Right cardiac atrium (tissue), 5 donors: ENCODE measurements at regions of chr20 and their contacts with region 1.

Region 1: GRCh38 chr20:60210779-60211617 is 252.8 kb downstream of the CDH26 start:
- DNase-seq: peak; percentile 53 to 86 (median 83)
- ATAC-seq: peak; percentile 74 to 85
- H3K4me3 ChIP-seq: no peak overlapping the region
- H3K27ac ChIP-seq: no peak overlapping the region
- H3K4me1 ChIP-seq: peaks cover 2% of the 10 kb centered on the region
- H3K27me3 ChIP-seq: no peaks in the 10 kb centered on the region

Region 2: GRCh38 chr20:60057123-60057801 is 153.7 kb before region 1 on chr20:
- intact Hi-C with region 1: loop called in 1 of 4 experiments (anchors 10 kb)
- DNase-seq: peak; percentile 59 to 80 (median 75)
- ATAC-seq: peak; percentile 33 to 53
- H3K4me3 ChIP-seq: no peak overlapping the region
- H3K27ac ChIP-seq: no peak overlapping the region
- H3K4me1 ChIP-seq: no peaks in the 10 kb centered on the region
- H3K27me3 ChIP-seq: no peaks in the 10 kb centered on the region

Region 3: GRCh38 chr20:60138256-60139106 is 72.5 kb before region 1 on chr20:
- intact Hi-C with region 1: no loop called
- DNase-seq: peak; percentile 47 to 80 (median 76)
- ATAC-seq: peak; percentile 70 to 75
- H3K4me3 ChIP-seq: no peak overlapping the region
- H3K27ac ChIP-seq: no peak overlapping the region
- H3K4me1 ChIP-seq: peaks cover 8% of the 10 kb centered on the region
- H3K27me3 ChIP-seq: no peaks in the 10 kb centered on the region

Region 4: DNA sequence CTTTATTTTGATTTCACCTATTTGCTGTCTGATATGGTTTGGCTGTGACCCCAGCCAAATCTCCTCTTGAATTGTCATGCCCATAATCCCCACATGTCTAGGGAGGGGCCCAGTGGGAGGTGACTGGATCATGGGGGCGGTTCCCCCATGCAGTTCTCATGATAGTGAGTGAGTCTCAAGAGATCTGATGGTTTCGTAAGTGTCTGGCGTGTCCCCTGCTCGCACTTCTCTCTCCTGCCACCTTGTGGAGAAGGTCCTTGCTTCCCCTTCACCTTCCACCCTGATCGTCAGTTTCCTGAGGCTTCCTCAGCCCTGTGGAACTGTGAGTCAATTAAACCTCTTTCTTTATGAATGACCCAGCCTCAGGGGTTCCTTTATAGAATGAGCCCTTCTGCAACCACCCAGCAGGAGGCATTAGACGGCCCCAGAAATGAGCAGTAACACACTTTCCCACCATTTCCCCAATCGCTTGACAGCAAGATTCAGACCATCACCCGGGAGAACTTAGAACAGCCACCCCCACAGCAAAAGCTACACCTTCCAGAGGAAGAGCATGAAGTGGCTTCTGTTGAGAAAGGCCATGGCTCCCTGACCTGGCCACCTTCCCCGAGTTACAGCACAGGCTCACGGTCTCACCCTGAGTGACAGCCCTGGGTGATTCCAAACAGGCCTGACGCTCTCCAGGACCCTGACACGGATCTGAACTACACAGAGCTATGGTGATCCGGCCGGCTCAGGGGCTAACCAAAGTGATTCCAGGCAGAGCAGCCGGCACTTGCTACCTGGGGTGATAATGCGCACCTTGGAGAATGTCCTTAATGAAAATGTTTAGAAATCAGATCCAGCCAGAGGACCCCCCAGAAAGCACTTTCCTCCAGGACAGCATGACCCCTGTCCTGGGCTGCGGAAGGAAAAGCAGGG is 909.9 kb after region 1 on chr20:
- intact Hi-C with region 1: loop called in 1 of 4 experiments (anchors 10 kb)
- DNase-seq: peak in 1 of 3 donors; percentile 57
- ATAC-seq: peak; percentile 52 to 54
- H3K4me3 ChIP-seq: no peak overlapping the region
- H3K27ac ChIP-seq: no peak overlapping the region
- H3K4me1 ChIP-seq: no peaks in the 10 kb centered on the region
- H3K27me3 ChIP-seq: no peaks in the 10 kb centered on the region

Region 5: GRCh38 chr20:61220160-61220559 is 1009.2 kb after region 1 on chr20:
- intact Hi-C with region 1: loop called in 1 of 4 experiments (anchors 10 kb)
- DNase-seq: no peak
- ATAC-seq: no peak
- H3K4me3 ChIP-seq: no peak overlapping the region
- H3K27ac ChIP-seq: no peak overlapping the region
- H3K4me1 ChIP-seq: no peaks in the 10 kb centered on the region
- H3K27me3 ChIP-seq: no peaks in the 10 kb centered on the region

Region 6: DNA sequence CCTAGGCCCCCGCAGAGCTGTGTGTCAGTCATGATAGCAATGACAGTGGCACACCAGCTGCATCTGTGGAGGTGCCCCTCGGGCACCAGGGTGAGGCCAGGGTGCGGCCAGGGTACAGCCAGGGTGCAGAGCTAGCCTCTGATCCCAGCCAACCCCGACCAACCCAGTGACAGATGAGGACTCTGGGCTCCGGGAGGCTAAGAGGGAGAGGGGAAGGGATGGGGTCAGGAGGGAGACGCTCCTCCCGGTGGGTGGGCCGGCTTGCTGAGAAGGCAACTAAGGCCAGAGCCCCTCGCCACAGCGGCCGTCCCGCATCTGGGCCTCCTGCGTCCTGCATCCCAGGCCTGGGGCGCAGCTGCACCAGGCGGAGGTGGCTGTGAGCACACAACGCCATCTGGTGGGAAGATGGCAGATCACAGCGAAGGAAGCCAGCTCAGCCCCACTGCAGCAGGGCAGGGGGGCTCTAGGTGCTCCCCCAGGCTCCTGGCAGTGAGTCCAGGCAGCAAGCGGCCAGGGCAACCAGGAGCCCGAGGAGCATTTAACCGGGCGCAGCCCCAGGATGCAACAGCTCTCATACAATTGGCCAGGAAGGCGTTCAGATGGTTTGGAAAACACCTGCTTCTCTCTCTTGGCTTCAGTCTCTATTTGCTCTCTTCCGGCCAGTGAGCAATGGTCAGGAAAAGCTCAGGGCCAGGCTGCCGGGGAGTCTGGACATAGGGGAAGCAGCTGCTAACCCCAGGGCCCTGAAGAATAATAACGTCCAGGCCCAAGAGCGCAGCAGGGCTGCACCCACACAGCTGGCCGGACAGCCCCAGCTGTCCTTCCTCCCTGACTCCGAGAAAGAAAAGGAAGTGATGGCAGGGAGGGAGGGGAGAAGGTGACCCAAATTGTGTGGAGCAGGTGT is 1685.3 kb after region 1 on chr20:
- intact Hi-C with region 1: loop called in 1 of 4 experiments (anchors 5 kb)
- DNase-seq: peak; percentile 35 to 68 (median 68)
- ATAC-seq: peak; percentile 52 to 69
- H3K4me3 ChIP-seq: no peak overlapping the region
- H3K27ac ChIP-seq: no peak overlapping the region
- H3K4me1 ChIP-seq: no peaks in the 10 kb centered on the region
- H3K27me3 ChIP-seq: no peaks in the 10 kb centered on the region